G401 (cell line): ENCODE measurements at regions of chr12 and their contacts with region 1.

Region 1: GRCh38 chr12:52645120-52645761 is 6.8 kb downstream of the KRT2 start:
- DNase-seq: no peak

Region 2: DNA sequence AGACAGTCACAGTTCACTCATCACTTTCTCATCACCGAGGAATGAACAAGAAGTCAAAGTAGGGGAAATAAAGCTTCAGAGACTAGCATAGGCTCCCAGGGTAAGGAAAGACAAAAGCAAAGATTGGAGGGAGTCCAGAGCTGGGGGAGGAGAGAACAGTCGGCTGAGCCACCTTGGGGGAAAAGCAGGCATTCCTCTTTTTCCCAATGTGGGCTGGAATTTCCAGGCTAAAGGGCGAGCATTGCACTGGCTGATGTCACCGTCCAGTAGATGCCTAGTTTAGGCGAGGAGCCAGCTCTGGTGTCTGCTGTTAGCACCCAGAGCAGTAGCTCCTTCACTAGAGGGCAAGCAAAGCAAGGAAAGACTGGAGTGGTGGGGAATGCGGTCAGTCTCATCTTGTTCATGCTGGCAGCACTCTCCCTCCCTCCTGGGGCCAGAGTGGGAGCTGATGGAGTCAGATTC is 202.6 kb before region 1 on chr12:
- in situ Hi-C with region 1: no loop called
- DNase-seq: no peak

Region 3: DNA sequence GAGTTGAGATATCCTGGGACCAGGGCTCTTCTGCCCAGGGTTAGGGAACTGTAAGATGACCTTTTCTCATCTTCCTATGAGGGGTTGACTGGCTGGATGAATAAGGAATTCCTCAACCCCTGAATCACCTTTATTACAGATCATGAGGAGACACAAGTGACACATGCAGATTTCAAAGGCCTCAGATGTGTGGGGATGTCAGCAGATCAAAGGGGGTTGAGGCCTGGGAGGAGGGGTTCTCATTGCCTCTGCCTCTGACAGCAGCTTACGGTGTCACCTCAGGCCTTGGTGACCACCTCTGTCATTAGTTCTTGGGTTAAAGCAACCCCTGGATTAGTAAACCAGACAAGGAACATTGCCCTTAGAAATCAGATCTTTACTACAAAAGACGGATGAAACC is 41.9 kb before region 1 on chr12:
- in situ Hi-C with region 1: no loop called
- DNase-seq: no peak

Region 4: GRCh38 chr12:52615208-52615868 is 29.9 kb before region 1 on chr12:
- in situ Hi-C with region 1: no loop called
- DNase-seq: no peak

Region 5: DNA sequence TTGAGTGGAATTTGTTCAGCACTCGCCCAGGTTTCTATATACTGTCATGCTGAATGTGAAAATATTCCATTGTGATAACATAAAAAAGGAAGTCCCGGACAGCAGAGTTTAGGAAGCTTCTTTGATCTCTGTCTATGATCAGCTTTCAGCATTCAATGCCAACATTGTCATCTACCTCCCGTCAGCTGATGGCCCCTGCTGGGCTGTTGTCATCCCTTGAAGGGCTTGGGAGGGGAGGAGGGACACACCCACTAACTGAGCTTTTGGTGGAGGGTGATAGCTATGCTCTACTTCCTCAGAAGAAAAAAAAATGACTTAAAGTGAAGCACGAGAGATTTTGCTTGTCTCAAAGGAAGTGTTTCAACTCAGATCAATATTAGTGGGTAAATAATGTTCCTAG is 62.8 kb after region 1 on chr12:
- in situ Hi-C with region 1: loop called (anchors 10 kb)
- DNase-seq: no peak